ENCODE measurements at regions of chr12 and their contacts with region 1.

Region 1: DNA sequence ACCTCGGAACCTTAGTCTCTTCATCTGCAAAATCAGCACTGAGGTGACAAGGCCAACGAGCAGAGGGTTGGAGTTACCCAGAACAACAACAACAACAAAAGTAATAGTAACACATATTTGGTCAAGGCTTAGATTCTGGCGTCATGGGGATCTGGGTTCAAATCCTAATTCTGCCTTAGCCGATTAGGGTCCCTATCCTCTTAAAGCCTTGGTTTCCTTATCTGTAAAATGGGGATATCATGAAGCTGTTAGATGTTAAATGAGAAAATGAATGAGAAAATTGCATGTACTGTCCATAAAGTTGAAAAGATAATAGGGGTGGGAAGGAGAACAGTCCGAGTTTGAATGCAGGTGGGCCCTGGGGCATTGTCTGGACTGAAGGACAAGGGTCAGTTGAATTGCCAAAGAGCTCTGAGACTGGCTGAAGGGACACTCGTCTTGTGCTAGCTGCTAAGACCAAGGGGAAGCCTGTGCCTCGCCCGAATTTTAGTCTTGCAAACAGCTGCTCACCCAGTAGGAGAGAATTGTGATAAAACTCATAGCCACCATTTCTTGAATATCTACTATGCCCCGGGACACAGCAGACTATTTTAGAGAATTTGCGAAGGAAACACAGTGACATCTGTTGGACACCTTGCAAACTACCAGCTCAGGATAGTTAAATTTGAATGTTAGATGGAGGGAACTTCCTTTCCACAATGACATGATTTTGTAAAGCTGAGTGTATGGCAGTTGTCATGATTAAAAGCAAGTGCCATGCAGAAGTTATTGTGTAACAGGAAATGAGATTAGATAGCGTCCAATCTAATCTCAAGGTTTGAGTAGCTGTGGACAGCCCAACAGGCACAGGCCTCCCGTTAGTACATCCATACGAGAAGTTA is 6.8 kb upstream of the HNF1A start:
- DNase-seq: peak; percentile 63
- ATAC-seq: peak; percentile 92
- H3K4me3 ChIP-seq: no peak overlapping the region
- H3K27ac ChIP-seq: no peak overlapping the region
- H3K4me1 ChIP-seq: no peaks in the 10 kb centered on the region
- H3K27me3 ChIP-seq: peaks cover 14% of the 10 kb centered on the region; the same call in 1 of the 2 replicates
- CTCF ChIP-seq: peak; percentile 84
- POLR2A ChIP-seq: no peak
- RAD21 ChIP-seq: peak; percentile 79

Region 2: GRCh38 chr12:120737557-120738251 is 233.8 kb before region 1 on chr12:
- CTCF ChIA-PET with region 1: interaction called, 8 read pairs
- POLR2A ChIA-PET with region 1: no interaction called
- dilution Hi-C with region 1: no loop called
- in situ Hi-C with region 1: no loop called
- intact Hi-C with region 1: loop called (anchors 1 kb)
- DNase-seq: no peak
- ATAC-seq: peak; percentile 69
- H3K4me3 ChIP-seq: no peak overlapping the region
- H3K27ac ChIP-seq: no peak overlapping the region
- H3K4me1 ChIP-seq: no peaks in the 10 kb centered on the region
- H3K27me3 ChIP-seq: no peaks in the 10 kb centered on the region
- CTCF ChIP-seq: peak; percentile 24; the same call in 1 of the 2 replicates
- POLR2A ChIP-seq: no peak
- RAD21 ChIP-seq: peak; percentile 38

Measured in IMR-90 (cell line).